ENCODE measurements at regions of chr3 and their contacts with region 1.

Region 1: DNA sequence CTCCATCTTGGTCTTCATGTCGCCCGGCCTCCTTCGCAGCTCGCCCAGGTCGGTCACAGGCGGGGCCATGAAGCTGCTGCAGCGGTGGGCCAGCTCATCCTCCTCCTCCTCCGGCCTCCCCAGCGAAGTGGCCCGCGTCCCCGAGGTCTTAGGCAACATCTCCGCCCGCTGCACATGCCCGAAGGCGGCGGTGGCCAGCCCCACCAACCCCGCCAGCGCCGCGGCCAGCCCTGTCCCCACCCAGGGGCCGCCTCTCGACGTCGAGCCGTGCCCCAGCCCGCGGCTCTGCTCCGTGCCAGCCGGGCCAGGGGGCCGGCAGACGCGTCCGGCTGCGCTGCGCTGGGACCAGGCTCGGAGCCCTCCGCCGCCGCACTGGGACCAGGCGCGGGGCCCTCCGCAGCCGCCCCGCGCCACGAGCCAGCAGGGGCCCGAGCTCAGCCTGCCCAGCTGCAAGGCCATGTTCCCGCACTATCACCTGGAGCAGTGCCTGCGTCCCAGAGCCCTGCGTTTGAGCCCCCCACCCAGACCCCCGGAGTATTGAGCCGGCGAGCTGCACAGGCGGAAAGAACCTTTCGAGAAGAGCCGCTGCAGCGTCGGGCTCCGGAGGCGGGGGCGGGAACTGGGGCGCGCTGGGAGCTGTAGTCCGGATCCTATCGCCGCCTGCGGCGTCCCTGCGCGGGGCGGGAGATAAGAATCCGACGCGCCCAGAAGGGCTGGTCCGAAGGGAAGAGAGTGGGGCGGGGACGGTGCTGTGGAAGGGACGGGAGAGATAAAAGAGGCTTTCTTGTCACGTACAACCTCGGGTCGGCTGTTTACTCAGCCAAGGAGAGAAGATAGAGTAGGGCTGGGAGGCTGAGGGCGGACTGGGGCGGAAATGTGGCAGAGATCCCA is at the start of gene CPOX:
- DNase-seq: peak; percentile 94
- ATAC-seq: peak; percentile 99
- H3K4me3 Mint-ChIP-seq: peak within 1 kb of the TSS; percentile 90
- H3K27ac Mint-ChIP-seq: peak within 1 kb of the TSS; percentile 94
- H3K4me1 Mint-ChIP-seq: peaks cover 54% of the 10 kb centered on the region
- H3K27me3 Mint-ChIP-seq: peaks cover 3% of the 10 kb centered on the region
- total RNA-seq, gene CPOX: 63.8 to 65.3 TPM

Region 2: GRCh38 chr3:98039322-98040024 is 553.8 kb before region 1 on chr3:
- CTCF ChIA-PET with region 1: interaction called, 40 read pairs
- POLR2A ChIA-PET with region 1: no interaction called
- DNase-seq: peak; percentile 85
- ATAC-seq: peak; percentile 98
- H3K4me3 Mint-ChIP-seq: peak overlapping the region; percentile 73
- H3K27ac Mint-ChIP-seq: peak overlapping the region; percentile 79
- H3K4me1 Mint-ChIP-seq: peaks cover 9% of the 10 kb centered on the region
- H3K27me3 Mint-ChIP-seq: peaks cover 34% of the 10 kb centered on the region

Region 3: GRCh38 chr3:98522244-98523090 is 70.8 kb before region 1 on chr3 and contains the start of gene CLDND1:
- CTCF ChIA-PET with region 1: interaction called, 7 read pairs
- POLR2A ChIA-PET with region 1: interaction called, 49 read pairs
- DNase-seq: peak; percentile 97
- ATAC-seq: peak; percentile 95
- H3K4me3 Mint-ChIP-seq: peak within 1 kb of the TSS; percentile 93
- H3K27ac Mint-ChIP-seq: peak within 1 kb of the TSS; percentile 97
- H3K4me1 Mint-ChIP-seq: peaks cover 60% of the 10 kb centered on the region
- H3K27me3 Mint-ChIP-seq: no peaks in the 10 kb centered on the region
- total RNA-seq, gene CLDND1: 410 to 414 TPM

Region 4: GRCh38 chr3:98540346-98540745 is 52.9 kb before region 1 on chr3:
- CTCF ChIA-PET with region 1: interaction called, 3 read pairs
- POLR2A ChIA-PET with region 1: interaction called, 14 read pairs
- DNase-seq: peak; percentile 54
- ATAC-seq: peak; percentile 61
- H3K4me3 Mint-ChIP-seq: peak overlapping the region; percentile 24
- H3K27ac Mint-ChIP-seq: peak overlapping the region; percentile 79
- H3K4me1 Mint-ChIP-seq: peaks cover 67% of the 10 kb centered on the region
- H3K27me3 Mint-ChIP-seq: no peaks in the 10 kb centered on the region

Region 5: GRCh38 chr3:98556164-98557130 is 36.8 kb before region 1 on chr3:
- CTCF ChIA-PET with region 1: interaction called, 4 read pairs
- POLR2A ChIA-PET with region 1: interaction called, 34 read pairs
- DNase-seq: peak; percentile 92
- ATAC-seq: peak; percentile 89
- H3K4me3 Mint-ChIP-seq: peak overlapping the region; percentile 89
- H3K27ac Mint-ChIP-seq: peak overlapping the region; percentile 97
- H3K4me1 Mint-ChIP-seq: peaks cover 88% of the 10 kb centered on the region
- H3K27me3 Mint-ChIP-seq: no peaks in the 10 kb centered on the region

Region 6: DNA sequence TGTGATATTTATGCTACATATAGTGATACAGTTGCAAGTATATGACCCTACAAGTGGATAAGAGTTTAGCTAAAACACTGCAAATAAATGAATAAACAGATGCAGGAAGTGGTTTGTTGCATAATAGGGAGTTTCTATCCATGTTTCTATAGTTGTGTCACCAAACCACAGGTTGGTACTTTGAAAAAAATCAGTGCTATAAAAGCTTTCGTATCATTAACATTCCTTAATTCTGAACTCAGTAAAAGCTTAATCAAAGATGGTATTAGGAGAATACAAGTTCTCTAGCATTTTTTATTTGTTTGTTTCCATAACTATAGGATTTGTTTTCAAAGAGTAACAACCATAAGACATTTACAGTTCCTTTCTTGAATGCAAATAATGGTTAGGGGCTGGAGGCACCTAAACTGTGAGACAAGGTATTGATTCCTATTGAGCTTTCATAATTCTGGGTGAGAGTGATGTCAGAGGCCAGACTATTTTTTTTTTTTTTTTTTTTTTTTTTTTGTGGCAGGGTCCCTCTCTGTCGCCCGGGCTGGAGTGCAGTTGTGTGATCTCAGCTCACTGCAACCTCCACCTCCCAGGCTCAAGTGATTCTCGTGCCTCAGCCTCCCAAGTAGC is 29.5 kb before region 1 on chr3:
- CTCF ChIA-PET with region 1: interaction called, 7 read pairs
- POLR2A ChIA-PET with region 1: interaction called, 15 read pairs
- DNase-seq: no peak
- ATAC-seq: peak; percentile 15
- H3K4me3 Mint-ChIP-seq: peak overlapping the region; percentile 58
- H3K27ac Mint-ChIP-seq: peak overlapping the region; percentile 96
- H3K4me1 Mint-ChIP-seq: peaks cover 90% of the 10 kb centered on the region
- H3K27me3 Mint-ChIP-seq: no peaks in the 10 kb centered on the region

Region 7: GRCh38 chr3:98628317-98628716 is 35.0 kb after region 1 on chr3:
- CTCF ChIA-PET with region 1: no interaction called
- POLR2A ChIA-PET with region 1: no interaction called
- DNase-seq: no peak
- ATAC-seq: no peak
- H3K4me3 Mint-ChIP-seq: no peak overlapping the region
- H3K27ac Mint-ChIP-seq: no peak overlapping the region
- H3K4me1 Mint-ChIP-seq: no peaks in the 10 kb centered on the region
- H3K27me3 Mint-ChIP-seq: no peaks in the 10 kb centered on the region

Region 8: GRCh38 chr3:98817547-98818041 is 224.3 kb after region 1 on chr3:
- CTCF ChIA-PET with region 1: interaction called, 18 read pairs
- POLR2A ChIA-PET with region 1: no interaction called
- DNase-seq: no peak
- ATAC-seq: peak; percentile 57
- H3K4me3 Mint-ChIP-seq: no peak overlapping the region
- H3K27ac Mint-ChIP-seq: no peak overlapping the region
- H3K4me1 Mint-ChIP-seq: no peaks in the 10 kb centered on the region
- H3K27me3 Mint-ChIP-seq: no peaks in the 10 kb centered on the region